Sigmoid colon (tissue), 7 donors: ENCODE measurements at regions of chr16 and their contacts with region 1.

Region 1: GRCh38 chr16:56625140-56625942 is at the start of gene MT1E:
- DNase-seq: peak; percentile 95
- H3K4me3 ChIP-seq: peak within 1 kb of the TSS; percentile 52 to 68 (median 58)
- H3K27ac ChIP-seq: peak within 1 kb of the TSS; percentile 89 to 92 (median 90)
- H3K4me1 ChIP-seq: peaks cover 0 to 23% (median 19%) of the 10 kb centered on the region in 4 donors
- H3K27me3 ChIP-seq: no peaks in the 10 kb centered on the region
- CTCF ChIP-seq: no peak
- EP300 ChIP-seq: peak in 3 of 4 donors; percentile 52 to 87 (median 83)
- POLR2A ChIP-seq: peak; percentile 83 to 85
- total RNA-seq, gene MT1E: 96.9 to 295 (median 136) TPM

Region 2: DNA sequence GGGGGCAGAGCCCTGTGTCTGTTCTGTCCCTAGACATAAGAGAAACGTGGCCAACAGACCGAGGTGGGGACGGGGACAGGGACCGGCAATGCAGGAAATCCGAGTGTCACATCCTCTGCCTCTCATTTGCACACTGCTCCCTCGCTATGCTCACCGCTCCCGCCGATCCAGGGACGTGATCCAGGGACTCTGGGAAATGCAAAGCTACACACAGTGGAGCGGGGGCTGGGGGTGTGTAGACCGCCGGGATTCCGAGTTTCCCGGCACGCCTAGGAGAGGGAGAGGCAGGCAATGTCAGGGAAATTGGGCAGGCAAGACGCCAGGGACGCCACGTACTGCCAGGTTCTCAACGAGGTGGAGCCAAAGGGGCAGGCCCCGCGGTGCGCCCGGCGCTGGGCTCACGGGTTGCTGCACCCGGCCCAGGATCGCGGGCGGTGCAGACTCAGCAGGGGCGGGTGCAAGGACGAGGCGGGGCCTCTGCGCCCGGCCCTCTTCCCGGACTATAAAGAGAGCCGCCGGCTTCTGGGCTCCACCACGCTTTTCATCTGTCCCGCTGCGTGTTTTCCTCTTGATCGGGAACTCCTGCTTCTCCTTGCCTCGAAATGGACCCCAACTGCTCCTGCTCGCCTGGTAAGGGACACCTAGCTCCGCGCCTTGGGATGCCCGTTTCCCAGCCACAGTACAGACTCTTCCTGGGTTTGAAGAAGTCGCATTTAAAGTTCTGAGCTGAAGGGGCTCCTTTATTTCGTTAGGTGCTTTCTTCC is 56.8 kb after region 1 on chr16 and contains the start of gene MT1X:
- intact Hi-C with region 1: loop called (anchors 2 kb)
- DNase-seq: peak; percentile 98
- H3K4me3 ChIP-seq: peak within 1 kb of the TSS; percentile 44 to 66 (median 58)
- H3K27ac ChIP-seq: peak within 1 kb of the TSS; percentile 66 to 83 (median 80)
- H3K4me1 ChIP-seq: peaks cover 0 to 27% (median 22%) of the 10 kb centered on the region in 4 donors
- H3K27me3 ChIP-seq: peaks cover 0 to 1% (median 0%) of the 10 kb centered on the region in 3 donors
- CTCF ChIP-seq: no peak
- EP300 ChIP-seq: peak in 3 of 4 donors; percentile 67 to 88 (median 88)
- POLR2A ChIP-seq: peak; percentile 93
- total RNA-seq, gene MT1X: 90.3 to 1,592 (median 363) TPM